ENCODE measurements at regions of chr2 and their contacts with region 1.

Region 1: DNA sequence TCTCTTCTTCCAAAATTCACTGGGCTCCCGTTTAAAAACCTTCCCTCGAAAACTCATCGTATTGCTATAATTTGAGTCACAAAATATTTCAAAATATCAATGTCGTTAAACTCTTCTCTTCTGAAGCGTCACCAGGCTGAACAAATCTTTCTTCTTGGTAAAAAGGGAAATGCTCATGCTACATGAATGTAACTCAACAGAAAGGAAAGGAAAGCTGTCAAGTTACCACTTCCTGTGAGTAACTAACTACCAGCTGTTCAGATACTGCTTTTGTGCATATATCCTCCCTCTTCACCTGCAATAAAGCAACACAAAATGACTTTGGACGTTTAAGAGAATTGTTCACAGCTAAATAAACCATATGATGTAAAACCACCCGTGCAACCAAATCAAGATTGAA is 95.4 kb downstream of the DOCK10 start:
- DNase-seq: no peak
- ATAC-seq: peak; percentile 50
- H3K4me3 Mint-ChIP-seq: peak overlapping the region; percentile 78
- H3K27ac Mint-ChIP-seq: peak overlapping the region; percentile 90
- H3K4me1 Mint-ChIP-seq: peaks cover 59% of the 10 kb centered on the region
- H3K27me3 Mint-ChIP-seq: no peaks in the 10 kb centered on the region
- CTCF ChIP-seq: no peak

Region 2: DNA sequence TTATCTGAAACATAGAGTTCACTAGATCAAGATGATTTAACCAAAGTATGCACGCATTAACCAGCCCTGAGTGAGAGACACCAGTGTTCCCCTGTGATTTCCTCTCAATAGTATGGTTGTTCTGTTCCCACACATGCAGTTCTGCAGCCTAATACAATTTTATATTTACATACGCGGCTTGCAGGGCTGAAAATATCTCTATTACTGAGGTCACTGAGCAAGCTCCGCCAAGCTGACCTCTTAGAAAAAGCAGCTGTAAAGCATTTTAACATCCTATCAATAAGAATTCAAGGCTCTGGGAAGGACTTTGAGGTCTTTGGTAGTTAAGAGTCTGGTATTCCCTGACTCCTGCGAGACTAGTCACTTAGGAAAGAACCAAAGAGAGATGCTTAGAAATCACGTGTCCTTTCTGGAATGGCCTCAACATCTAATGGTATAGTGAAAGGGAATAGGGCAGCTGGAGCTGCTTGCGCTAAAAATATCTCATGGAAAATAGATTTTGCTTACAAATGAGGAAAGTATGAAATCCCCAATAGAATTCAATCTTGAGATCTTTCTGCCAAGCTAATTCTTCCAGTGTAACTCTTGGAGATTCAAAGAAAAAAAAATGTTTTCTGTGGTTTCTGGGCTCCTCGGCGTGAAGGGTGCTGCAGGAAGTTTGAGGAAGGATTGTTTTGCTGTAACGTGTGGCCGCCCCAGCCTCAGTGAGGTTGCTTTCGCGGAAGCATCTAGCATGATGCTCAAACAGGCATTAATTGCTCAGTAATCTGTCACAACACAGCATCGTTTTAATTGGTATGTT is 36.2 kb after region 1 on chr2:
- CTCF ChIA-PET with region 1: interaction called, 4 read pairs
- POLR2A ChIA-PET with region 1: interaction called, 12 read pairs
- intact Hi-C with region 1: loop called (anchors 5 kb)
- DNase-seq: peak; percentile 59
- ATAC-seq: no peak
- H3K4me3 Mint-ChIP-seq: peak overlapping the region; percentile 59
- H3K27ac Mint-ChIP-seq: peak overlapping the region; percentile 89
- H3K4me1 Mint-ChIP-seq: peaks cover 85% of the 10 kb centered on the region
- H3K27me3 Mint-ChIP-seq: no peaks in the 10 kb centered on the region
- CTCF ChIP-seq: no peak

Region 3: GRCh38 chr2:225052703-225053102 is 105.8 kb after region 1 on chr2:
- CTCF ChIA-PET with region 1: no interaction called
- POLR2A ChIA-PET with region 1: no interaction called
- intact Hi-C with region 1: no loop called
- DNase-seq: peak; percentile 43
- ATAC-seq: peak; percentile 92
- H3K4me3 Mint-ChIP-seq: no peak overlapping the region
- H3K27ac Mint-ChIP-seq: peak overlapping the region; percentile 85
- H3K4me1 Mint-ChIP-seq: peaks cover 59% of the 10 kb centered on the region
- H3K27me3 Mint-ChIP-seq: no peaks in the 10 kb centered on the region
- CTCF ChIP-seq: no peak

Region 4: DNA sequence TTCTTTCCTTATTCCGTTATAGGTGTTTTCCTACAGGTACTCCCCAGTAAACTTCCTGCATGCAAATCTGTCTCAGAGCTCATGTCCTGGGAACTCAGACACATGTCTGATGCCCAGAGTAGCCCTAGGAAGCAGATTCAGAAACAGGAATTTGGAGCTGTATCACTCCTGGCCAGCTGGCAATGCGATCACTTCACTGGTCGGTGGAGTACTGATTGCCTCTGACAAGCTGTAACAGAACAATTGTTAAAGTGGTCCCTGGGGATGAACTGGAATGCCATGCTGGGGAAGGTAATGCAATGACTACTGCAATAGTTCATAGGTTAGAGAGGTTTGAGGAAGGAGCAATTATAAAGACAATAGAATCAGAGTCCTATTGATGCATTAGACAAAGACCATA is 227.0 kb after region 1 on chr2:
- CTCF ChIA-PET with region 1: no interaction called
- POLR2A ChIA-PET with region 1: no interaction called
- intact Hi-C with region 1: no loop called
- DNase-seq: no peak
- ATAC-seq: no peak
- H3K4me3 Mint-ChIP-seq: no peak overlapping the region
- H3K27ac Mint-ChIP-seq: no peak overlapping the region
- H3K4me1 Mint-ChIP-seq: no peaks in the 10 kb centered on the region
- H3K27me3 Mint-ChIP-seq: no peaks in the 10 kb centered on the region
- CTCF ChIP-seq: no peak

Measured in activated CD8-positive, alpha-beta T cell treated with anti-CD3 and anti-CD28 coated beads for 36 hours (primary cell).